PC-9 (cell line): ENCODE measurements at regions of chrX and their contacts with region 1.

Region 1: DNA sequence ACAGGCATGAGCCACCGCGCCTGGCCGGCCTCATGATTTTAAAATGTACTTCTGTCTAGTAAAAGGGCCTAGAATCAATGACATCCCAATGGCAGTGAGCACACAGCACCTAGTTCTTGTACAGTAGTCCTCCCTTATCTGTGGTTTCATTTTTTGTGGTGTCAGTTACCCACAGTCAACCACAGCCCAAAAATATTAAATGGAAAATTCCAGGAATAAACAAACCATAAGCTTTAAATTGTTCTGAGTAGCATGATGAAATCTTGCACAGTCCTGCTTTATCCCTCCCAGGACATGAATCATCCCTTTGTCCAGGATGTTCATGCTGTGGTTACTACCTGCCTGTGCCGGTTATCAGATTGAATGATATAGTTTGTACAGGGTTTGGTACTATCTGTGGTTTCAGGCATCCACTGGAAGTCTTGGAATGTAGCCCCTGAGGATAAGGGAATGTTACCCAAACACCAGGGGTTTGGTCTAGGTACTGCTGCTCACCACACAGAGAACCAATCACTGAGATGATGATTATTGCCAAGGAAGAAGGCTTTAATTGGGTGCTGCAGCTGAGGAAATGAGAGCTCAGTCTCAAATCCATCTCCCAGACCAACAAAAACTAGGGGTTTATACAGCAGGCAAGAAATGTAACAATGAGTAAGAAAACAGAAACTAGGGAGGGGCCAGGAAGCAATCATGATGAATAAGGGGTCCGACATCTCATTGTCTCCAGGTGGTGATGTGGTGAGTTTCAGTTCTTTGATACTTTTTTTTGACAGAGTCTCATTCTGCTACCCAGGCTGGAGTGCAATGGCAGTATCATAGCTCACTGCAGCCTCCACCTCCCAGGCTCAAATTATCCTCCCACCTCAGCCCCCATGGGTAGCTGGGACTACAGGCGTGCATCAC is 16.2 kb upstream of the FHL1 start:
- DNase-seq: peak; percentile 61 to 99
- H3K4me3 ChIP-seq: no peak overlapping the region
- H3K27ac ChIP-seq: peak overlapping the region; percentile 88
- H3K4me1 ChIP-seq: peaks cover 35% of the 10 kb centered on the region
- H3K27me3 ChIP-seq: no peaks in the 10 kb centered on the region
- CTCF ChIP-seq: no peak

Region 2: GRCh38 chrX:135973548-135974278 is 157.5 kb before region 1 on chrX and contains the start of gene MMGT1:
- CTCF ChIA-PET with region 1: no interaction called
- POLR2A ChIA-PET with region 1: interaction called, 3 read pairs
- intact Hi-C with region 1: loop called (anchors 10 kb)
- DNase-seq: peak; percentile 77 to 84
- H3K4me3 ChIP-seq: peak within 1 kb of the TSS; percentile 99
- H3K27ac ChIP-seq: peak within 1 kb of the TSS; percentile 93
- H3K4me1 ChIP-seq: peaks cover 28% of the 10 kb centered on the region
- H3K27me3 ChIP-seq: no peaks in the 10 kb centered on the region
- CTCF ChIP-seq: no peak
- total RNA-seq, gene MMGT1: 23.7 and 26.2 TPM in 2 replicates

Region 3: GRCh38 chrX:136106920-136107528 is 24.2 kb before region 1 on chrX:
- CTCF ChIA-PET with region 1: no interaction called
- POLR2A ChIA-PET with region 1: no interaction called
- intact Hi-C with region 1: no loop called
- DNase-seq: no peak
- H3K4me3 ChIP-seq: no peak overlapping the region
- H3K27ac ChIP-seq: no peak overlapping the region
- H3K4me1 ChIP-seq: no peaks in the 10 kb centered on the region
- H3K27me3 ChIP-seq: no peaks in the 10 kb centered on the region
- CTCF ChIP-seq: no peak

Region 4: GRCh38 chrX:136147315-136147901 is 16.2 kb after region 1 on chrX and contains the start of gene FHL1:
- CTCF ChIA-PET with region 1: no interaction called
- POLR2A ChIA-PET with region 1: no interaction called
- intact Hi-C with region 1: no loop called
- DNase-seq: no peak
- H3K4me3 ChIP-seq: no peak within 1 kb of the TSS
- H3K27ac ChIP-seq: no peak within 1 kb of the TSS
- H3K4me1 ChIP-seq: no peaks in the 10 kb centered on the region
- H3K27me3 ChIP-seq: no peaks in the 10 kb centered on the region
- CTCF ChIP-seq: no peak
- total RNA-seq, gene FHL1: 0.65 and 1.7 TPM in 2 replicates